Common myeloid progenitor, CD34-positive (primary cell): ENCODE measurements at regions of chr9 and their contacts with region 1.

Region 1: DNA sequence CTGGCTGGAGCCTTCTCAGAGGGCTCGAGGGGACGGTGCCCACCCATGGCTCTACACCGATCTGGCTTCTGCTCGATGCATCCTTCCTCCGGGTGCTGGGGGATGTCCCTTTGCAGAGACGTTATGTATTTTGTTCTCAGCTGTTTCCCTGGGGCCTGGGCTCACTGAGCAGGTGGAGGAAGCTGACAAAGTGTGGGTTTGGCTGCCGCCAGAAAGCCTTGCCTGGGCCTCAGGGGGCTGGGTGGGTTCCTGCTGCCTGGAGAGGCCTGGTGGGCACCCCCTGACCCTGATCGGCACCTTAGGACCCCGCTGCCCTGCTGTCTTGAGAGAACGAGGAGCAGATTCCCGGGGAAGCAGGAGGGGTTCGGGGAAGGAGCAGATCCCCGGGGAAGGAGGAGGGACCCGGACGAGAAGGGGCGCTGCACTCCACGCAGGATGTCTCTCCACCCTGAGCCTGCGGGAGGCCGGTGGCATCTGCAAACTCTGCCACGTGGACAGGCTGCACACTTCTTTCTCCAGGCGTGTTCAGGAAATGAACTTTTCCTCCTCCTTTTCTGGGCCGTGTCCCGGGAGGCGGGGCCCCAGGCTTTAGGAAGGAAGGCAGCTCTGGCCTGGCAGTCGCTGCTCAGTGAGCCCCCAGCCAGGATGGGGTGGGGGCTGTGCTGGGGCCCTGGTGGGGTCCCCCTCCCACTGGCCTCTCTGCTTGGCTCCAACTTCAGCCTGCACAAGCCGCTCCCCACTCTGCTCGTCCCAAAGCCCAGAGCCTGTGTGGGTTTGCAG is 148.9 kb downstream of the RXRA start:
- DNase-seq: peak; percentile 66 to 98 (median 94)
- H3K4me3 ChIP-seq: peak overlapping the region in 3 of 7 experiments; percentile 4 to 46 (median 14)
- H3K27ac ChIP-seq: peak overlapping the region in 1 of 2 experiments; percentile 54
- H3K4me1 ChIP-seq: peaks cover 0 to 45% (median 28%) of the 10 kb centered on the region in 4 experiments
- H3K27me3 ChIP-seq: no peaks in the 10 kb centered on the region

Region 2: DNA sequence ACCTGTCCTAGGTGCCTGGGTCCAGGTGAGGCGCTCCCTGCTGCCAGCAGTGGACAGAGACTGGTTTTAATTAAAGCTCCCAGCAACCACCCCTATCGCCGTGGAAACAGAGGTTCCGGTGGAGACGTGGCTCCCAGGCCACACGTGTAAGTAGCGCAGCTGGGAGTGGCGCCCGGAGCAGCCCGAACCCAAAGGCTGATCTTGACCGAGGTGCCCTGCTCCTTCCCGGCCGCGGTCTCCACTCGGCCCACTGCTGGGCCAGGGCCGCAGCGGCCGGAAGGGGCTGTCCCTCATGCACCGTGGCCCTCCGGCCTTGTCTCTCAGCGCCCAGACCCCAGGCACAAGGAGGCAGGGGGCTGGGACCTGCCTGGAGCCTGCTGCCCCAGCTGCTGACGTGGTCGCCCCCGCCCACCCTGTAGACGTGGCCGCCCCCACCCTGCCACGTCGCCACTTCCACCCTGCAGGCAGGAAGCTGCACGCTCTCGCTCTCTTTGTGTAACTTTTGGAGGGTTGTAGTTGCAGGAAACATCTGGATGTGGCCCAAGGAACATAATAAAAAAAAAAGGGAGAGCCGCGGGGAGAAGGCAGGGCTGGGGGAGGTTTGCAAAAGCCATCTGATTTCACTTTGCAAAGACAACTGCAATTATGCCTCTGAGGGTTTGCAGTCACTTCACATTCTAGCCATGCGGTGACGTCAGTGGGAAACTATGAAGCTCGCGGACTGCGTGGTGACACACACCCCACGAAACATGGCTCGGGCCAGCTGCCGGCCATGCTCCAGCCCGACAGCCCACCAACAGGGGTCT is 19.1 kb before region 1 on chr9:
- CTCF ChIA-PET with region 1: interaction called, 18 read pairs
- POLR2A ChIA-PET with region 1: interaction called, 12 read pairs
- DNase-seq: peak; percentile 97 to 100 (median 99)
- H3K4me3 ChIP-seq: peak overlapping the region in 4 of 7 experiments; percentile 42 to 57 (median 48)
- H3K27ac ChIP-seq: peak overlapping the region; percentile 74 to 89
- H3K4me1 ChIP-seq: peaks cover 0 to 65% (median 52%) of the 10 kb centered on the region in 4 experiments
- H3K27me3 ChIP-seq: no peaks in the 10 kb centered on the region

Region 3: DNA sequence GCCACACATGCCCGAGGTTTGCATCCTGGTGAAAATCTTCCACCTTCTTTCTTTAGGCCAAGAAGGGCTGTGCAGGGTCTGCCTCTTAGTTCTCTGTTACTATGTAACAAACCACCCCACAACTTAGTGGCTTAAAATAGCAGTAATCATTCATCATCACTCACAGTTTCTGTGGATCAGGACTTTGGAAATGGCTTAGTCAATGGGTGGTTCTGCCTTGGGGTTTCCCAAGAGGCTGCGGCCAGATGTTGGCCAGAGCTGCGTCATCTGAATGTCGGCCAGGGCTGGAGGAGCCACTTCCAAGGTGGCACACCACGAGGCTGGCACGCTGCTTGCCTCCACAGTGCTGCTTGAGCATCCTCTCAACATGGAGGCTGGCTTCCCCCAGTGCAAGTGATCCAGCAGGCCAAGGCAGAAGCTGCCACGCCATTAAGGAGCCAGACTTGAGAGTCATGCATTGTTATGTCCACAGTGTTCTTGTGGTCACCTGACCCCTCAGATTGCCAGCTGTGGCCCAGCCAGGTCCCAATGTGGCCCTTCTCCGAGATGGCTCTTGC is 13.7 kb before region 1 on chr9:
- CTCF ChIA-PET with region 1: interaction called, 18 read pairs
- POLR2A ChIA-PET with region 1: interaction called, 12 read pairs
- DNase-seq: no peak
- H3K4me3 ChIP-seq: no peak overlapping the region
- H3K27ac ChIP-seq: no peak overlapping the region
- H3K4me1 ChIP-seq: peaks cover 0 to 67% (median 52%) of the 10 kb centered on the region in 4 experiments
- H3K27me3 ChIP-seq: no peaks in the 10 kb centered on the region

Region 4: GRCh38 chr9:134492721-134493460 is 17.7 kb after region 1 on chr9:
- CTCF ChIA-PET with region 1: no interaction called
- POLR2A ChIA-PET with region 1: no interaction called
- DNase-seq: no peak
- H3K4me3 ChIP-seq: no peak overlapping the region
- H3K27ac ChIP-seq: no peak overlapping the region
- H3K4me1 ChIP-seq: peaks cover 0 to 8% (median 3%) of the 10 kb centered on the region in 4 experiments
- H3K27me3 ChIP-seq: no peaks in the 10 kb centered on the region

Region 5: DNA sequence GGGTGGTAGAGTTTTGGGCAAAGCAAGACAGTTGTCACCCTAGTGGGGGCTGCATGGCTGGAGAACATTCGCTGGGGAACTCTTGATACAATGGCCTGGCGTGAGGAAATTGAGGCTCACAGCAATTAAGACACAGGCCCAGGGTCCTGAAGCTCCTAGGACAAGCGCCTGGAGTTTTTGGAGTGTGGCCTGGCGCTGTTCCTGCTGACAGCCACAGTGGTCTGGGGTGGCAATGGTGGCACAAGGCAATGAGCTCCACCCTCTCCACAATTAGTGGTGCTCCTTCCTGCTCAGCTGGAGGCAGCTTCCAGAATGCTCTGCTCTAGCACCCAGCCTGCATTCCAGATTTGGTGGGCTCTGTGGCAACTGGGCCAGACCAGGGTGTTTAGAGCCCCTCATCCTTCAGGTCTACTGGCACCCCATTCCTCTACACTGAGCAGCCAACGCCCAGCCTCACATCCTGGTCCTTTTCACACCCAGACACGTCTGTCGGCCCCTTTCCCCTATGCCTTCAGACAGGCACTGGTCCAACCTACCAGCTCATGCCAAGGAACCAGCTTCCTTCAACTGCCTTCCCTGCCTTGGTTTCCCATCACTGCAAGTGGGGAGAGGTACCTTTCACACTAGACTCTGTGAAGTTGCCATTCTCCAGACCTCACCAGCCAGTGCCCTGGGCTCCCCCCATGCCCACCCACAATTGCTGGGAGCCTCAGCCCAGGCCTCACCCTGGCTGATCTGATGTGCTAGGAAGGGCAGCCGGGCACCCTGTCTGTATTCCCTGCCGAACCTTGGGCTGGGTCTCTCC is 28.3 kb after region 1 on chr9:
- CTCF ChIA-PET with region 1: no interaction called
- POLR2A ChIA-PET with region 1: no interaction called
- DNase-seq: no peak
- H3K4me3 ChIP-seq: no peak overlapping the region
- H3K27ac ChIP-seq: no peak overlapping the region
- H3K4me1 ChIP-seq: peaks cover 0 to 14% (median 8%) of the 10 kb centered on the region in 4 experiments
- H3K27me3 ChIP-seq: peaks cover 0 to 32% (median 13%) of the 10 kb centered on the region in 5 experiments

Region 6: GRCh38 chr9:134525841-134526595 is 50.8 kb after region 1 on chr9:
- CTCF ChIA-PET with region 1: no interaction called
- POLR2A ChIA-PET with region 1: no interaction called
- DNase-seq: no peak
- H3K4me3 ChIP-seq: no peak overlapping the region
- H3K27ac ChIP-seq: no peak overlapping the region
- H3K4me1 ChIP-seq: peaks cover 0 to 7% (median 0%) of the 10 kb centered on the region in 4 experiments
- H3K27me3 ChIP-seq: no peaks in the 10 kb centered on the region

Region 7: DNA sequence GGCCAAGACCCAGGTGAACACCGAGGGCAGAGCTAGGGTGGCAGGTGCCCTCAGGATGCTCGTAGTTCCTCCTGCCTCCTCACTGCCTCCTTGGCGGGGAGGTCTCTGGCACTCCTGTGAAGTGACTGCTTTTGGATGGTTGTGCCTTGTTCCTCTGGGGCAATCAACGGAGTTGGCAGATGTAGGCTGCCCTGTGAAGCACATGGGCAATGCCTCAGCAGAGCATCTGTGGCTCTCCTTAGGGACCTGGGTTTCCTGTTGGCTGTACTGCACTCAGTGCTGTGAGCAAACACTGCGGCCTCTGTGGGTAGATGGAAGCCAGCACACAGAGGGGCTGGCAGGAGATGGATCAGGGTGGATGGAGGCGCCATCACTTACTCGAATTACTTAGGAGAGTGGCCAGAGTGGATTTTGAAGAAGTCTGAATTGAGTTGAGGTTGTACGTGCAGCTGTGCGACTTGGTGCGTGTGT is 95.0 kb after region 1 on chr9:
- CTCF ChIA-PET with region 1: no interaction called
- POLR2A ChIA-PET with region 1: no interaction called
- DNase-seq: peak in 2 of 3 donors; percentile 28 to 30
- H3K4me3 ChIP-seq: no peak overlapping the region
- H3K27ac ChIP-seq: no peak overlapping the region
- H3K4me1 ChIP-seq: no peaks in the 10 kb centered on the region
- H3K27me3 ChIP-seq: no peaks in the 10 kb centered on the region